A673 (cell line): ENCODE measurements at regions of chr6 and their contacts with region 1.

Region 1: GRCh38 chr6:128731249-128732165 is 151.4 kb upstream of the LAMA2 start:
- DNase-seq: peak; percentile 61
- H3K4me3 ChIP-seq: no peak overlapping the region
- H3K27ac ChIP-seq: no peak overlapping the region
- H3K4me1 ChIP-seq: no peaks in the 10 kb centered on the region
- H3K27me3 ChIP-seq: no peaks in the 10 kb centered on the region
- CTCF ChIP-seq: peak; percentile 65

Region 2: DNA sequence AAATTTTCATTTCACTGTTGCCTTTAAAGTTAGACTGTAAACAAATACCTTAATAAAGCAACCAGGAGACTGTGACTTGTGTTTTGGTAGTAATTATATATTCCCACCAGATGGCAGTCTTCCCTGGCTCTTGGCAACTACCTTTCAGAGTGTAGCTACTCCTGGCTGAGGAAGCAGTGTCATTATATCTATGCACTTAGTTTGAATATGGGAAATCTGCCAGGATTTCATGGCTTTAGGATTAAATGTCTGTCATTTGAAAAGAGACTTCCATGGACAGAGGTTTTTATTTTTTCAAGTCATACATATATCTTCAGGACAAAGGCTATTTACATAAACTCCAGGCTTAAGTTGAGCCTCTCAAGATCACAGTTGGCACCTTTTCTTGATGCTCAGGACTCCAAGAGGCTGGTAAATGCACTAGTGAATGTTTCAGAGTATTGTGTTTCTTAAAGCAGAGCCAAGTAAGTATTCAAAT is 994.5 kb before region 1 on chr6:
- CTCF ChIA-PET with region 1: interaction called, 4 read pairs
- POLR2A ChIA-PET with region 1: no interaction called
- intact Hi-C with region 1: loop called (anchors 2 kb)
- DNase-seq: peak; percentile 93
- H3K4me3 ChIP-seq: no peak overlapping the region
- H3K27ac ChIP-seq: no peak overlapping the region
- H3K4me1 ChIP-seq: peaks cover 7% of the 10 kb centered on the region
- H3K27me3 ChIP-seq: no peaks in the 10 kb centered on the region
- CTCF ChIP-seq: peak; percentile 72

Region 3: GRCh38 chr6:128339635-128340450 is 391.7 kb before region 1 on chr6:
- CTCF ChIA-PET with region 1: no interaction called
- POLR2A ChIA-PET with region 1: no interaction called
- intact Hi-C with region 1: loop called (anchors 10 kb)
- DNase-seq: no peak
- H3K4me3 ChIP-seq: no peak overlapping the region
- H3K27ac ChIP-seq: no peak overlapping the region
- H3K4me1 ChIP-seq: peaks cover 24% of the 10 kb centered on the region
- H3K27me3 ChIP-seq: no peaks in the 10 kb centered on the region
- CTCF ChIP-seq: no peak

Region 4: GRCh38 chr6:128487055-128487454 is 244.5 kb before region 1 on chr6:
- CTCF ChIA-PET with region 1: no interaction called
- POLR2A ChIA-PET with region 1: no interaction called
- intact Hi-C with region 1: no loop called
- DNase-seq: peak; percentile 30
- H3K4me3 ChIP-seq: no peak overlapping the region
- H3K27ac ChIP-seq: no peak overlapping the region
- H3K4me1 ChIP-seq: peaks cover 23% of the 10 kb centered on the region
- H3K27me3 ChIP-seq: no peaks in the 10 kb centered on the region
- CTCF ChIP-seq: peak; percentile 29; the same call in 1 of the 2 replicates